ENCODE measurements at regions of chr3 and their contacts with region 1.

Region 1: DNA sequence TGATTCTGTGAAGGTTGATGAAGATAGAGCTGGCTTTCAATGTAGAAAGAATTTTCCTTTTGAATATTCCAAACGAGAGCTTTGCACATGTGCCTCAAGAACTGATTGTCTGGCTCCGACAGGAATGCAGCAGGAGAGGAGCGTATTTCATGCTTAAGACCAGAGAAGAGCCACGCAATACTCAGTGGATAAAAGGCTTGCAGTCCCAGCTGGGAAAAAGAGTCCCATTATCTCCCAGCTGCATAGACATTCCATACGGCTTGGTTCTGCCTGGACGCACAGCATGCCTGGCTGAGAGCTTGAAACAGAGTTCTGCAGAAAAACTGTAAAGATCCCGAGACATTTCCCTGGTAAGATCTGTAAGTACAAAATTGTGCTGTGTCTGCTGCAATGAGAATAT is at the start of gene CNTN6:
- DNase-seq: no peak
- H3K4me3 ChIP-seq: no peak within 1 kb of the TSS
- H3K27ac ChIP-seq: no peak within 1 kb of the TSS
- H3K4me1 ChIP-seq: no peaks in the 10 kb centered on the region
- H3K27me3 ChIP-seq: no peaks in the 10 kb centered on the region
- CTCF ChIP-seq: no peak
- POLR2A ChIP-seq: no peak
- total RNA-seq, gene CNTN6: 0.35 TPM in 1 of 7 donors, not detected in the others

Region 2: DNA sequence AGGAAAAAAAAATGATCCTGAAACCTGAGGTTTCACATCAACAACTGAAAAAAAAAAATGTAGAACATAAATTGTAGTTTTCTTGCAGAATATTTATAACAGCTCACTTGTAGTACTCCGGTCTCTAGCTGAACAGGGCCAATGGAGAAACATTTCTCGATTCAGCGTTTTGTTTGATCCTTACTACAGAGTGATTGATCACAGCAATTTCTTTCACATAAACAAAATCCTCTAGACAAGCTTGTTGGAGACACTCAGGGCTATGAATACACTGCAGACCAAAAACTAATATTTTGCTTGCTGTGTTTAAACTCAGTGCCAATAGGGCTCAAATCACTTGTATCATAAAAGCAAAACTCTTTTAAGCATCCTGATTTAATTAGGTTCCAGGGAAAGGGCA is 126.9 kb before region 1 on chr3:
- intact Hi-C with region 1: no loop called
- DNase-seq: no peak
- H3K4me3 ChIP-seq: no peak overlapping the region
- H3K27ac ChIP-seq: no peak overlapping the region
- H3K4me1 ChIP-seq: no peaks in the 10 kb centered on the region
- H3K27me3 ChIP-seq: no peaks in the 10 kb centered on the region
- CTCF ChIP-seq: no peak
- POLR2A ChIP-seq: no peak

Region 3: GRCh38 chr3:1200371-1200770 is 107.6 kb after region 1 on chr3:
- intact Hi-C with region 1: no loop called
- DNase-seq: no peak
- H3K4me3 ChIP-seq: no peak overlapping the region
- H3K27ac ChIP-seq: no peak overlapping the region
- H3K4me1 ChIP-seq: no peaks in the 10 kb centered on the region
- H3K27me3 ChIP-seq: no peaks in the 10 kb centered on the region
- CTCF ChIP-seq: no peak
- POLR2A ChIP-seq: no peak

Region 4: DNA sequence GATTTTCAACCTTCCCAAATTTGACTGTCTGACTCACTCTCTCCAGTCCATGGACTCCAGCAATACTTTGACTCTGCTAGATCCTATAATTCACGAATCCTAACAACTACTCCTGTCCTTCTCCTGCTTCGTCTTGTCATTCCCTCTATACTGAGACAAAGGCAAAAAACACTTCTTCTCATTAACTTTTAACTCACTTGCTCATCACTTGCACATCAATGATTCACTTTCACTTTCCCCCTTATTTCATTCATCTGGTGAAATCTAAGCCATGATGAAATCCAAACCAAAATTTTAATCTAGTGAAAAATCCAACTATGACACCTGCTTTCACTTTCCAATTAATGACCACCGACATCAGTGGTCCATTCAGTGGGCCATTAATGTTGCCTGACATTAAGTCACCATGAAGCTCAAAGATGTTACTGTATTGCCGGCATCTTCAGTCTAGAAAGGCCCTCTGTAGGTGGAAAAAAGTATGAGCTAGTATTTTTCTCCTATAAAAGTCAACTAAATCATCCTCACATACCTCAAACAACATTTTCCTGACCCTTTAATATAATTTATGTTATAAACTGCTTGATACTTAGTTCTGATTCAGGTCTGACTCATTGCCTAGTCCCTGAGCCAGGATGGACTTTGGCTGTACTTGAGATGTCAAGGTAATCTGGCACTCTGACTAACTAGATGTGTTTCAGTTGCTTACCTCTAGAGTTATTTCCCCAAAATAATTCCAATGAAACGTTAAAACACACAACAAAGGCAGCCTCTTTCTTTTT is 158.7 kb after region 1 on chr3:
- intact Hi-C with region 1: loop called (anchors 10 kb)
- DNase-seq: no peak
- H3K4me3 ChIP-seq: no peak overlapping the region
- H3K27ac ChIP-seq: no peak overlapping the region
- H3K4me1 ChIP-seq: no peaks in the 10 kb centered on the region
- H3K27me3 ChIP-seq: no peaks in the 10 kb centered on the region
- CTCF ChIP-seq: no peak
- POLR2A ChIP-seq: no peak

Measured in spleen (tissue), 13 donors.